Endothelial cell of umbilical vein (primary cell): ENCODE measurements at regions of chr4 and their contacts with region 1.

Region 1: GRCh38 chr4:75895744-75896314 is 6.4 kb downstream of the PPEF2 start:
- DNase-seq: peak; percentile 35
- H3K4me3 ChIP-seq: no peak overlapping the region
- H3K27ac ChIP-seq: no peak overlapping the region
- H3K4me1 ChIP-seq: no peaks in the 10 kb centered on the region
- H3K27me3 ChIP-seq: peaks cover 2 to 3% of the 10 kb centered on the region in 2 experiments
- CTCF ChIP-seq: peak; percentile 53 to 56
- POLR2A ChIP-seq: no peak

Region 2: GRCh38 chr4:75666299-75666698 is 229.5 kb before region 1 on chr4:
- CTCF ChIA-PET with region 1: no interaction called
- POLR2A ChIA-PET with region 1: no interaction called
- dilution Hi-C with region 1: no loop called
- intact Hi-C with region 1: no loop called
- DNase-seq: no peak
- H3K4me3 ChIP-seq: no peak overlapping the region
- H3K27ac ChIP-seq: no peak overlapping the region
- H3K4me1 ChIP-seq: peaks cover 8% of the 10 kb centered on the region
- H3K27me3 ChIP-seq: no peaks in the 10 kb centered on the region
- CTCF ChIP-seq: no peak
- POLR2A ChIP-seq: no peak

Region 3: GRCh38 chr4:75881476-75881875 is 14.4 kb before region 1 on chr4:
- CTCF ChIA-PET with region 1: interaction called, 13 read pairs
- POLR2A ChIA-PET with region 1: no interaction called
- dilution Hi-C with region 1: no loop called
- intact Hi-C with region 1: no loop called
- DNase-seq: no peak
- H3K4me3 ChIP-seq: no peak overlapping the region
- H3K27ac ChIP-seq: no peak overlapping the region
- H3K4me1 ChIP-seq: peaks cover 2% of the 10 kb centered on the region
- H3K27me3 ChIP-seq: peaks cover 2% of the 10 kb centered on the region in 2 experiments
- CTCF ChIP-seq: no peak
- POLR2A ChIP-seq: no peak

Region 4: GRCh38 chr4:75908555-75908954 is 12.7 kb after region 1 on chr4:
- CTCF ChIA-PET with region 1: interaction called, 82 read pairs
- POLR2A ChIA-PET with region 1: no interaction called
- dilution Hi-C with region 1: no loop called
- intact Hi-C with region 1: no loop called
- DNase-seq: no peak
- H3K4me3 ChIP-seq: no peak overlapping the region
- H3K27ac ChIP-seq: no peak overlapping the region
- H3K4me1 ChIP-seq: no peaks in the 10 kb centered on the region
- H3K27me3 ChIP-seq: no peaks in the 10 kb centered on the region
- CTCF ChIP-seq: no peak
- POLR2A ChIP-seq: no peak

Region 5: DNA sequence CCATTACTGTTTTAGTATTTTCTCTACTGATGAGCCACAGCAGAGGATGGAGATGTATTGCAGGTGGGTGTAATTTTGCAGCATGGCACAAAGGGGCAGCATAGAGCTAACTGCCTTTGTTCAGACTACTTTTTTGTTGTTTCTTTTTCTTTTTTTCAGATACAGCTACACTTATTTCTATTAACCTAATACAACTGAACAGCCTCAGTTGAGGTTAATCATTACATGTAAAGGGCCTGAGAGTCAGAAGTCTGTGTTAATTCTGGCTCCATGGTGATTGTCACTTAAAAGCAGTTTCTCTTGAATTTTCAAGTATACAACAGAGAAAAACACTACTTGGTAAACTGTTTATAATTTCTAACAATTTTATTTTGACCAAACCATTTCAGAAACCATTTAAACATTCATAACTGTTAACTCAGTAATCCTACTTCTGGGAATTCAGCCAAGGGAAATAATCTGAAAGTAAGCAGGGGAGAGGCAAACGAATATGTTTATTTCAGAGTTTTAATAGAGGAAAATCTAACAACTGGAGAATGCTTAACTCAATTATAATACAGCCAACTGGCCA is 20.3 kb after region 1 on chr4:
- CTCF ChIA-PET with region 1: interaction called, 28 read pairs
- POLR2A ChIA-PET with region 1: no interaction called
- dilution Hi-C with region 1: no loop called
- intact Hi-C with region 1: no loop called
- DNase-seq: peak; percentile 73
- H3K4me3 ChIP-seq: no peak overlapping the region
- H3K27ac ChIP-seq: no peak overlapping the region
- H3K4me1 ChIP-seq: no peaks in the 10 kb centered on the region
- H3K27me3 ChIP-seq: no peaks in the 10 kb centered on the region
- CTCF ChIP-seq: peak; percentile 64 to 75
- POLR2A ChIP-seq: no peak

Region 6: DNA sequence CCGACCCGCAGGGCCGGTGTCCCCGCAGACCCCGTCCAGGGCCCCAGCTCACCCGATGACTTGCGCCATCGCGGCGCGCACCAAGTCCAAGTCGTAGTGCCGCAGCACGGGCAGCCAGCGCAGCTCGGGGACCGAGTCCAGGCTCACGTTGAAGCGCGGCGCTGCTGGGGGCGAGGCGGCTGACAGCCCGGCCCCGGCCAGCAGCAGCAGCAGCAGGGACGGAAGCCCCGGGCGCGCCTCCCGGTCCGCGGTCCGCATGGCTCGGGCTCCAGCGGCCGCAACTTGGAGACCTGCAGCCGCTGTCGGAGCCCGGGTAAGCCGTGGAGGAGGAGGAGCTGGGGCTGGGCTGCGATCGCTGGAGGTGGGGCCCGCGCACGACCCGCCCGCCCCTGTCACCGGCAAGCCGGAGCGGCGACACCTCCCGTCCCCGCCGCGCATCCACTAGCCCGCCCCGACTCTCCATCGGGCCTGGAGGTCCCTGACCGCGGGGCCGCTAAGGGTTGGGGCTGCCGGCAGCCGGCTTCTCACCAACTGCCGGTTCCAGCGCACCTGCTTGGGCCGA is 44.9 kb after region 1 on chr4 and contains the start of gene NAAA:
- CTCF ChIA-PET with region 1: interaction called, 18 read pairs
- POLR2A ChIA-PET with region 1: no interaction called
- dilution Hi-C with region 1: no loop called
- intact Hi-C with region 1: loop called (anchors 1 kb)
- DNase-seq: peak; percentile 81
- H3K4me3 ChIP-seq: peak within 1 kb of the TSS; percentile 46 to 62 (median 61)
- H3K27ac ChIP-seq: no peak within 1 kb of the TSS
- H3K4me1 ChIP-seq: peaks cover 3% of the 10 kb centered on the region
- H3K27me3 ChIP-seq: no peaks in the 10 kb centered on the region
- CTCF ChIP-seq: peak in 1 of 2 donors; percentile 36
- POLR2A ChIP-seq: no peak
- total RNA-seq, gene NAAA: 15.3 and 20.3 TPM in 2 replicates

Region 7: DNA sequence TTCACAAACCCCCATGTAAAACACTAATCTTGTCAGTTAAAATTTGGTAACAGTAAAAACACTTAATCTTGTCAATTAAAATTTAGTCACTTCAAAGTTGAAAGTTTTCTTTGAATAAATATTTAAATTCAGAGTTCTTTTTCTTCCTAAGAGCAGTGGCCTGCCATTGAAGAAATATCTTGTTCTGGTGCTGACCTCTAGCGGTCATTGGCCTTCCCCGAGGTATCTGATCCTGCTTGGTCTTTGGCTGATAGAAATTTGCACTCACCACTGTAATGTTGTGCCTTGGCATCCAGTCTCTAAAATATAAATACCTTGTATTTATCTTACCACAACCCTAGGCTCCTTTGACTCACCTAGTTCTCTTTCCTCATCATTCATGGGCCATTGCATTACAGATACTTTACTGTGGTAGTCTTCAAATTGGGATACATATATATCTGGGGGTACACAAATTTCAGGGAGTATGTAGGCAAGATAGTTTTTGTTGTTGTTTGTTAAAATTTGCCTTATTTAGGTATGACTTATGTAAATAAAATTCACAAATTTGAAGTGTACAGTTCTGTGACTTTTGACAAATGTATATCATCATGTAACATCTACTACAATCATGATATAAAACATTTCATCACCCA is 171.9 kb after region 1 on chr4:
- CTCF ChIA-PET with region 1: interaction called, 3 read pairs
- POLR2A ChIA-PET with region 1: no interaction called
- dilution Hi-C with region 1: no loop called
- intact Hi-C with region 1: loop called (anchors 5 kb)
- DNase-seq: peak; percentile 76
- H3K4me3 ChIP-seq: no peak overlapping the region
- H3K27ac ChIP-seq: no peak overlapping the region
- H3K4me1 ChIP-seq: no peaks in the 10 kb centered on the region
- H3K27me3 ChIP-seq: peaks cover 0 to 2% of the 10 kb centered on the region in 2 experiments
- CTCF ChIP-seq: peak; percentile 68 to 70
- POLR2A ChIP-seq: no peak

Region 8: GRCh38 chr4:76087007-76087769 is 191.4 kb after region 1 on chr4:
- CTCF ChIA-PET with region 1: interaction called, 14 read pairs
- POLR2A ChIA-PET with region 1: no interaction called
- dilution Hi-C with region 1: no loop called
- intact Hi-C with region 1: no loop called
- DNase-seq: peak; percentile 78
- H3K4me3 ChIP-seq: no peak overlapping the region
- H3K27ac ChIP-seq: no peak overlapping the region
- H3K4me1 ChIP-seq: peaks cover 7% of the 10 kb centered on the region
- H3K27me3 ChIP-seq: peaks cover 4 to 15% of the 10 kb centered on the region in 2 experiments
- CTCF ChIP-seq: peak; percentile 55 to 64
- POLR2A ChIP-seq: no peak